ENCODE measurements at regions of chr1 and their contacts with region 1.

Region 1: DNA sequence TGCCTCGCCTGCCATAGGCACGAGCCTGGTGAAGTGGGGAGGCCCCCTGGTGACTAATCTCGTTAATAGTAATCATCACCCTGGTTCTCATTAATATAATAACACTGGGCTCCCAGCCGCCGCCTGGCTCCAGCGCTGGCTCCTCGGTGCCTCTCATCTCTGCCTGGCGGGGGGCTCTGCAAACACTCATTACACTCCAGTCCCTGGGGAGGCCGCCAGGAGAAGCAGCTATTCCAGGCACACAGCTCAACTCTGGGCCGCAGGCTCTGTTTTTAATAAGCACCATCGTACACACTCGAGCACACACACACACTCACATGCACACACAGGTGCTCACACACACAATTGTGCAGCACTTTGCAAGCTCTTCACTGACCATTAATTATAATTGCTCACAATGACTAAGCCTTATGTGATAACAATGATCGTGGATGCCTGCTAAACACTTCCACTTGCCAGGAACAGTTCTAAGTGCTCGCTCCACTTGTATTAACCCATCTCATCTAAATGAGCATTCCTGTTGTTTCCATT is 52.2 kb downstream of the SDC3 start:
- DNase-seq: no peak
- H3K4me3 ChIP-seq: no peak overlapping the region
- H3K27ac ChIP-seq: no peak overlapping the region
- H3K4me1 ChIP-seq: peaks cover 12% of the 10 kb centered on the region
- H3K27me3 ChIP-seq: peaks cover 2% of the 10 kb centered on the region
- CTCF ChIP-seq: peak in 1 of 2 donors; percentile 4

Region 2: DNA sequence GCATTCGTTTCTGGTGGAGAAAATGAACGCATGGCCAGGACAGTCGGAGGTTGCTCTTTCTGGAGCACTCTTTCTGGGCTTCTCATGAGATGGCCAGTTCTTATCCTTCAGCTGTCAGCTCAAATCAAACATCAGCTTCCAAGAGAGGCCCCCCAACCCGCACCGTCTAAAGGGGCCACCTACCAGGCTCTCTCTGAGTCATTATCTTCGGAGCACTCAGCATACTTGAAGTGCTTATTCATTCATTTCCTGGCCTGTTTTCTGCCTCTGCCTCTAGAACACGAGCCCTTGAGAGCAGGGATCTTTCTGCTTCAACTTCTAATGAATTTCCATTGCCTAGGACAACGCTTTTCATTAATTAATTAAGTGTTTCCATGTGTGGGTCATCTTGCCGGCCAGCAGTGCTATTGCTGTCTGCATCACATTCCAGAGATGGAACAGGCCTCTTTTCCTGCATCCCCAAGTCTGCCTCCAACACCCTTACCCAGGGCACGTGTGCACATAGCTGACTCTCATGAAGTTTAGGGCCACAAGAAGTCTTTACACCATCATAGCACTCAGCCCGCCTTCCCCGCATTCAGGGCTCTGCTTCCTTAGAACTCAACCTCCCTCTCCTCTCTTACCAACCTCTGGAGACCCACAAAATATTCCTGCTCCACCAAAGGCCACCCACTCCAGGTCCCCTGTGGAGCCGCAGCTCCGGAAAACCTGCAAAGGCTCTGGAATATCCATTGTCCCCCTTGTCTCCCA is 46.6 kb before region 1 on chr1:
- CTCF ChIA-PET with region 1: no interaction called
- dilution Hi-C with region 1: no loop called
- in situ Hi-C with region 1: no loop called
- intact Hi-C with region 1: loop called (anchors 2 kb)
- DNase-seq: peak; percentile 52
- H3K4me3 ChIP-seq: no peak overlapping the region
- H3K27ac ChIP-seq: no peak overlapping the region
- H3K4me1 ChIP-seq: peaks cover 16% of the 10 kb centered on the region
- H3K27me3 ChIP-seq: no peaks in the 10 kb centered on the region
- CTCF ChIP-seq: no peak

Region 3: DNA sequence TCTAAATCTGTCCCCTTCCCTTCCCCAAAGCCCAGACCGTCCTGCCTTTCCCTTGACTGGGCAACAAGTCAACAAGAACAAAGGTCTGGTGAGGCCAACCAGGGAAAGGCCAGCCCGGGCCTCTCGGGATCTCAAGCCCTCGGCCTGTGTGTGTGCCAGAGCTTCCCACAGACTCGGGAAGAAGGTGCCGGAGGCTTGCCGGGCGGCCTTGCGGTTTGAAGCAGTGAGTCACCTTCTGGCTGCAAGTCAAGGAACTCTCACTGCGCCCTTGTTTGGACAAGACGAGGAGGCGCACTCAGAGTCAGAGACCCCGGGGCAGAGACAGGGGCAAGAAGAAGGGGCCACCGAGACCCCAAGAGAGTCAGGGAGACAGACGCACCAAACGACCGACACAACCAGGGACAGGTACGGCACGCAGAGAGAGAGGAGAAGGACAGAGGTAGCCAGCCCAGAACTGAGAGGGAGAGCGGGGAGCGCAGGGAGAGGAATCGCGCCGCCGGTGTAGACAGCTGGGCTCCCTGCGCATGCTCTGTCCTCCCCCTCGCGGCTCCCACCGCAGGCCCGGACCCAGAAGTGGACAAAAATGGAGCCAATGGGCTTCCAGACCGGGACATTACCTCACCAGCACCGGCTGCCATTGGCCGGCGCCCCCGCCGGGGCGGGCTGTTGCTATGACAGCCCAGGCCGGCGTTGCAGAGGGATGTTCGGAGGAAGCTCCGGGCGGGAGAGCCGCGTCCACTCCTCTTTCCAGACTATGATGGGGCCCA is 32.2 kb before region 1 on chr1:
- CTCF ChIA-PET with region 1: no interaction called
- dilution Hi-C with region 1: no loop called
- in situ Hi-C with region 1: no loop called
- intact Hi-C with region 1: loop called (anchors 5 kb)
- DNase-seq: peak; percentile 98
- H3K4me3 ChIP-seq: peak overlapping the region; percentile 38 to 58 (median 55)
- H3K27ac ChIP-seq: peak overlapping the region; percentile 64
- H3K4me1 ChIP-seq: peaks cover 19% of the 10 kb centered on the region
- H3K27me3 ChIP-seq: peaks cover 4% of the 10 kb centered on the region
- CTCF ChIP-seq: no peak

Measured in mammary epithelial cell (primary cell).